ENCODE measurements at regions of chr15 and their contacts with region 1.

Region 1: GRCh38 chr15:60179786-60180391 is 175.8 kb downstream of the FOXB1 start:
- DNase-seq: peak; percentile 25 to 52 (median 38)
- ATAC-seq: peak; percentile 55
- H3K4me3 ChIP-seq: no peak overlapping the region
- H3K27ac ChIP-seq: no peak overlapping the region
- H3K4me1 ChIP-seq: no peaks in the 10 kb centered on the region
- H3K27me3 ChIP-seq: no peaks in the 10 kb centered on the region
- CTCF ChIP-seq: peak; percentile 48 to 85 (median 71)
- POLR2A ChIP-seq: no peak

Region 2: DNA sequence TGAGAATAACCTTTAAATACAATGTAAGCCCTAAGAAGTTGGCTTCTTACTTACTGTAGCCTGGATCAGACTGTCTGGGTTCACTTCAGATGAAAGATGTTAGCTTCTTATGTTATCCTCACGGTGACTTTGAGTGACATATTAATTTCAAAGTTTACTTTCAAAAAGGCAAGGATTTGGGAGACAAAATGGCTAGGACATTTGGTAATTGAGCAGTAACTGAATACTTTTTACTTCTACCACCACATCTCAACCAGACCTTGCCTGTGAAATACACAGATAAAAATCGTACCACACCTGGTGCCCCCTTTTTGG is 454.8 kb before region 1 on chr15:
- intact Hi-C with region 1: loop called (anchors 10 kb)
- DNase-seq: no peak
- ATAC-seq: no peak
- H3K4me3 ChIP-seq: no peak overlapping the region
- H3K27ac ChIP-seq: no peak overlapping the region
- H3K4me1 ChIP-seq: no peaks in the 10 kb centered on the region
- H3K27me3 ChIP-seq: no peaks in the 10 kb centered on the region
- CTCF ChIP-seq: no peak
- POLR2A ChIP-seq: no peak

Region 3: DNA sequence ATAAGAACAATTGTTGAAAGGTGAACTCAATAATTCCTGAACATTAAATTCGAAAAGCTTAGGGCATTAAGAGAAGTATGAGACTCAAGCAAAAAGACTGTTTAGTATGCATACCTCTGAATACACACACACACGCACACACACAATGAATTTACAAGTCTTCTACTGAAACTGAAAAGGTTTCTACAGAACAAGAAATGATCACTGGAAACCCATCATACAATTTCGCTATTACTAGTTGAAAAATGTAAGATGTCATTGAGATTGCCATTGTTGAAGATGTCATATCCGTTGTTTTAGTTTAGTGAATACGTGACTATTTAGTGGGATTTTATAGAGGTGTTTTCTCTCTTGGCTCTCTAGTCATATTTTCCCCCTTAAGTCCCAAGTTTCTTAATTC is 69.0 kb before region 1 on chr15:
- intact Hi-C with region 1: no loop called
- DNase-seq: no peak
- ATAC-seq: no peak
- H3K4me3 ChIP-seq: no peak overlapping the region
- H3K27ac ChIP-seq: no peak overlapping the region
- H3K4me1 ChIP-seq: no peaks in the 10 kb centered on the region
- H3K27me3 ChIP-seq: peaks cover 0 to 4% of the 10 kb centered on the region in 2 donors
- CTCF ChIP-seq: no peak
- POLR2A ChIP-seq: no peak

Measured in body of pancreas (tissue), 4 donors.